ENCODE measurements at regions of chr4 and their contacts with region 1.

Region 1: GRCh38 chr4:6783053-6783981 is 790 bp downstream of the KIAA0232 start:
- DNase-seq: peak; percentile 78 to 94 (median 86)
- ATAC-seq: peak; percentile 78
- H3K4me3 ChIP-seq: peak overlapping the region; percentile 77
- H3K4me3 Mint-ChIP-seq: peak overlapping the region; percentile 92
- H3K27ac ChIP-seq: peak overlapping the region; percentile 92 to 96
- H3K27ac Mint-ChIP-seq: peak overlapping the region; percentile 86
- H3K4me1 ChIP-seq: peaks cover 43% of the 10 kb centered on the region
- H3K4me1 Mint-ChIP-seq: peaks cover 59% of the 10 kb centered on the region
- H3K27me3 ChIP-seq: no peaks in the 10 kb centered on the region
- H3K27me3 Mint-ChIP-seq: no peaks in the 10 kb centered on the region
- CTCF ChIP-seq: no peak

Region 2: GRCh38 chr4:6574747-6575502 is 208.4 kb before region 1 on chr4 and contains the start of gene MAN2B2:
- CTCF ChIA-PET with region 1: no interaction called
- POLR2A ChIA-PET with region 1: no interaction called
- intact Hi-C with region 1: loop called in 1 of 2 experiments (anchors 5 kb)
- DNase-seq: peak; percentile 51 to 89 (median 80)
- ATAC-seq: peak; percentile 93
- H3K4me3 ChIP-seq: peak within 1 kb of the TSS; percentile 98
- H3K4me3 Mint-ChIP-seq: peak within 1 kb of the TSS; percentile 93
- H3K27ac ChIP-seq: peak within 1 kb of the TSS; percentile 55 to 74
- H3K27ac Mint-ChIP-seq: peak within 1 kb of the TSS; percentile 79
- H3K4me1 ChIP-seq: peaks cover 30% of the 10 kb centered on the region
- H3K4me1 Mint-ChIP-seq: peaks cover 4% of the 10 kb centered on the region
- H3K27me3 ChIP-seq: no peaks in the 10 kb centered on the region
- H3K27me3 Mint-ChIP-seq: no peaks in the 10 kb centered on the region
- CTCF ChIP-seq: no peak
- total RNA-seq, gene MAN2B2: 25.9 to 28.5 TPM

Region 3: DNA sequence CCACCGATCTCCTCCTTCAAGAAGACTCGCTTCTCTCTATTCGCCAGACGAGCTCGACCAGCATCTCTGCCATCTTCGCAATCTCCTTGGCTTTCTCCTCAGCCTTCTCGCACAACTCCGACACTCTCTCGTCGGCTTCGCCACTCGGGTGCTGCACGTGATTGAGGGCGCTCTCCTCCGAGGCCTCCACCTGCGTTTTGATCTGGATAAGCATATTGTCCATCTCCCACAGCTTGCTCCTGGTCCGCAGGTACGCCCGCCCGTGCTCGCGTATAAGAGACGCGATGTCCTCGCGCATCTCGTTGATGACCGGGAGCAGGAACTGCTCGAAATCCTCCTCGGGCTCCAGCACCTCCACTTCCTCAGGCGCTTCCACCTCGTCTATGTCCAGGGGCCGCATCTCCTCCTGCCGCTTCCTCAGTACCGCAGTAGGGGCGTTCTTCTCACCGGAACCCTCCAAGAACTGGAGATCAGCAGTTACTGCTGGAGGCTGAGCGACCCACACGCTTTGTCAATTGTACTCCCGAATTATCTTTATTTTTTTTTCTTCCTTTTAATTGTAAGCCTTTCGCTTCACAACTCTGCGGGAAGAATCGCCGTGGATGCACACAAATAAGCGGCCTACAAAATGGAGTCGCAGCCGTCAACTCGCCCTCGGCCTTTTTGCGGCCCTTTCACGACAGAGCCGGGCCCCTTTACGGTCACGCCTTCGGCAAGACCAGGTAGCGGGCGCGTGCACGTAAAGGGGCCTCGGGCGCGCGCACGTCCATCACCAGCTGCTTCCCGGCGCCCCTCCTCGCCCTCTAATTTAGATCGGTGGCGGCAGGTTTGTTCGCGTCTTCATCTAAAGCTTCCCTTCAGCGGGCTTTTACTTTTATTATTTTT is 73.8 kb before region 1 on chr4 and contains the start of gene MRFAP1L1:
- CTCF ChIA-PET with region 1: no interaction called
- POLR2A ChIA-PET with region 1: interaction called, 7 read pairs
- intact Hi-C with region 1: loop called in 1 of 2 experiments (anchors 1 kb)
- DNase-seq: peak; percentile 94 to 98 (median 96)
- ATAC-seq: peak; percentile 87
- H3K4me3 ChIP-seq: peak within 1 kb of the TSS; percentile 74
- H3K4me3 Mint-ChIP-seq: peak within 1 kb of the TSS; percentile 99
- H3K27ac ChIP-seq: peak within 1 kb of the TSS; percentile 79 to 85
- H3K27ac Mint-ChIP-seq: peak within 1 kb of the TSS; percentile 97
- H3K4me1 ChIP-seq: peaks cover 40% of the 10 kb centered on the region
- H3K4me1 Mint-ChIP-seq: peaks cover 69% of the 10 kb centered on the region
- H3K27me3 ChIP-seq: no peaks in the 10 kb centered on the region
- H3K27me3 Mint-ChIP-seq: no peaks in the 10 kb centered on the region
- CTCF ChIP-seq: no peak
- total RNA-seq, gene MRFAP1L1: 26.6 to 27.0 TPM

Region 4: DNA sequence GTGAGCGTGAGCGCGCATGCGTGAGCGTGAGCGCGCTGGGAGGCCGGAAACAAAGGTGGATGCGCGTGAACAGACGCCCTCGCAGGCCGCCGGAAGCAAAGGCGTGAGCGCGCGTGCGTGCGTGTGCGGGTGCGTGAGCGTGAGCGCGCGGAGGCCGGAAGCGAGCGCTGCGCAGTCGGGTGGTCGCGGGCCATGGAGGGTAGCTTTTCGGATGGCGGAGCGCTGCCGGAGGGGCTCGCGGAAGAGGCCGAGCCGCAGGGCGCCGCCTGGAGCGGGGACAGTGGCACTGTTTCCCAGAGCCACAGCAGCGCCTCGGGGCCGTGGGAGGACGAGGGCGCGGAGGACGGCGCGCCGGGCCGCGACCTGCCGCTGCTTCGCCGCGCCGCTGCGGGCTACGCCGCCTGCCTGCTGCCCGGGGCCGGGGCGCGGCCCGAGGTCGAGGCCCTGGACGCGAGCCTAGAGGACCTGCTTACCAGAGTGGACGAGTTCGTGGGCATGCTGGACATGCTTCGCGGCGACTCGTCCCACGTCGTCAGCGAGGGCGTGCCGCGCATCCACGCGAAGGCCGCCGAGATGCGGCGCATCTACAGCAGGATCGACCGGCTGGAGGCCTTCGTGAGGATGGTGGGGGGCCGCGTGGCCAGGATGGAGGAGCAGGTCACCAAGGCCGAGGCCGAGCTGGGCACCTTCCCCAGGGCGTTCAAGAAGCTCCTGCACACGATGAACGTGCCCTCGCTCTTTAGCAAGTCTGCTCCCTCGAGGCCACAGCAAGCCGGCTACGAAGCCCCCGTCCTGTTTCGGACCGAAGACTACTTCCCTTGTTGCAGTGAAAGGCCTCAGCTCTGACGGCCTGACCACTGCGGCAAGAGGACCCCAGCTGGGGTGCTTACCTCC is 67.1 kb before region 1 on chr4 and contains the start of gene BLOC1S4:
- CTCF ChIA-PET with region 1: interaction called, 16 read pairs
- POLR2A ChIA-PET with region 1: interaction called, 22 read pairs
- intact Hi-C with region 1: loop called in 1 of 2 experiments (anchors 2 kb)
- DNase-seq: peak; percentile 79 to 98 (median 88)
- ATAC-seq: peak; percentile 79
- H3K4me3 ChIP-seq: peak within 1 kb of the TSS; percentile 95
- H3K4me3 Mint-ChIP-seq: peak within 1 kb of the TSS; percentile 99
- H3K27ac ChIP-seq: peak within 1 kb of the TSS; percentile 82 to 85
- H3K27ac Mint-ChIP-seq: peak within 1 kb of the TSS; percentile 99
- H3K4me1 ChIP-seq: peaks cover 31% of the 10 kb centered on the region
- H3K4me1 Mint-ChIP-seq: peaks cover 39% of the 10 kb centered on the region
- H3K27me3 ChIP-seq: no peaks in the 10 kb centered on the region
- H3K27me3 Mint-ChIP-seq: no peaks in the 10 kb centered on the region
- CTCF ChIP-seq: no peak
- total RNA-seq, gene BLOC1S4: 24.6 to 27.6 TPM

Region 5: GRCh38 chr4:6855692-6856297 is 72.5 kb after region 1 on chr4:
- CTCF ChIA-PET with region 1: no interaction called
- POLR2A ChIA-PET with region 1: no interaction called
- intact Hi-C with region 1: loop called in 1 of 2 experiments (anchors 10 kb)
- DNase-seq: peak in 4 of 14 experiments; percentile 31 to 73 (median 66)
- ATAC-seq: peak; percentile 84
- H3K4me3 ChIP-seq: no peak overlapping the region
- H3K4me3 Mint-ChIP-seq: no peak overlapping the region
- H3K27ac ChIP-seq: peak overlapping the region in 1 of 2 donors; percentile 42
- H3K27ac Mint-ChIP-seq: peak overlapping the region; percentile 64
- H3K4me1 ChIP-seq: peaks cover 10% of the 10 kb centered on the region
- H3K4me1 Mint-ChIP-seq: peaks cover 18% of the 10 kb centered on the region
- H3K27me3 ChIP-seq: no peaks in the 10 kb centered on the region
- H3K27me3 Mint-ChIP-seq: no peaks in the 10 kb centered on the region
- CTCF ChIP-seq: no peak

Region 6: GRCh38 chr4:7042697-7043464 is 259.6 kb after region 1 on chr4 and contains the start of gene TADA2B:
- CTCF ChIA-PET with region 1: no interaction called
- POLR2A ChIA-PET with region 1: interaction called, 7 read pairs
- intact Hi-C with region 1: loop called in 1 of 2 experiments (anchors 2 kb)
- DNase-seq: peak; percentile 72 to 97 (median 89)
- ATAC-seq: peak; percentile 76
- H3K4me3 ChIP-seq: peak within 1 kb of the TSS; percentile 87
- H3K4me3 Mint-ChIP-seq: peak within 1 kb of the TSS; percentile 93
- H3K27ac ChIP-seq: peak within 1 kb of the TSS; percentile 44 to 81
- H3K27ac Mint-ChIP-seq: peak within 1 kb of the TSS; percentile 82
- H3K4me1 ChIP-seq: peaks cover 55% of the 10 kb centered on the region
- H3K4me1 Mint-ChIP-seq: peaks cover 57% of the 10 kb centered on the region
- H3K27me3 ChIP-seq: no peaks in the 10 kb centered on the region
- H3K27me3 Mint-ChIP-seq: no peaks in the 10 kb centered on the region
- CTCF ChIP-seq: peak; percentile 22
- total RNA-seq, gene TADA2B: 41.5 to 44.6 TPM